ENCODE measurements at regions of chr14 and their contacts with region 1.

Region 1: GRCh38 chr14:104650057-104650981 is 39.1 kb upstream of the INF2 start:
- DNase-seq: peak; percentile 77
- H3K4me3 ChIP-seq: peak overlapping the region; percentile 65
- H3K27ac ChIP-seq: no peak overlapping the region
- H3K4me1 ChIP-seq: peaks cover 19% of the 10 kb centered on the region
- CTCF ChIP-seq: peak; percentile 94

Region 2: GRCh38 chr14:104708606-104709268 is 58.4 kb after region 1 on chr14:
- CTCF ChIA-PET with region 1: no interaction called
- POLR2A ChIA-PET with region 1: no interaction called
- intact Hi-C with region 1: loop called (anchors 1 kb)
- DNase-seq: peak; percentile 77
- H3K4me3 ChIP-seq: no peak overlapping the region
- H3K27ac ChIP-seq: no peak overlapping the region
- H3K4me1 ChIP-seq: no peaks in the 10 kb centered on the region
- CTCF ChIP-seq: peak; percentile 93

Measured in OCI-LY7 (cell line).